ENCODE measurements at regions of chr19 and their contacts with region 1.

Region 1: GRCh38 chr19:8513687-8514504 is at the start of gene ZNF414:
- DNase-seq: peak; percentile 98
- ATAC-seq: peak; percentile 95
- total RNA-seq, gene ZNF414: 9.8 TPM

Region 2: GRCh38 chr19:7919610-7920518 is 594.0 kb before region 1 on chr19 and contains the start of gene SNAPC2:
- intact Hi-C with region 1: loop called (anchors 1 kb)
- DNase-seq: peak; percentile 99
- ATAC-seq: peak; percentile 72
- total RNA-seq, gene SNAPC2: 10.3 TPM

Region 3: DNA sequence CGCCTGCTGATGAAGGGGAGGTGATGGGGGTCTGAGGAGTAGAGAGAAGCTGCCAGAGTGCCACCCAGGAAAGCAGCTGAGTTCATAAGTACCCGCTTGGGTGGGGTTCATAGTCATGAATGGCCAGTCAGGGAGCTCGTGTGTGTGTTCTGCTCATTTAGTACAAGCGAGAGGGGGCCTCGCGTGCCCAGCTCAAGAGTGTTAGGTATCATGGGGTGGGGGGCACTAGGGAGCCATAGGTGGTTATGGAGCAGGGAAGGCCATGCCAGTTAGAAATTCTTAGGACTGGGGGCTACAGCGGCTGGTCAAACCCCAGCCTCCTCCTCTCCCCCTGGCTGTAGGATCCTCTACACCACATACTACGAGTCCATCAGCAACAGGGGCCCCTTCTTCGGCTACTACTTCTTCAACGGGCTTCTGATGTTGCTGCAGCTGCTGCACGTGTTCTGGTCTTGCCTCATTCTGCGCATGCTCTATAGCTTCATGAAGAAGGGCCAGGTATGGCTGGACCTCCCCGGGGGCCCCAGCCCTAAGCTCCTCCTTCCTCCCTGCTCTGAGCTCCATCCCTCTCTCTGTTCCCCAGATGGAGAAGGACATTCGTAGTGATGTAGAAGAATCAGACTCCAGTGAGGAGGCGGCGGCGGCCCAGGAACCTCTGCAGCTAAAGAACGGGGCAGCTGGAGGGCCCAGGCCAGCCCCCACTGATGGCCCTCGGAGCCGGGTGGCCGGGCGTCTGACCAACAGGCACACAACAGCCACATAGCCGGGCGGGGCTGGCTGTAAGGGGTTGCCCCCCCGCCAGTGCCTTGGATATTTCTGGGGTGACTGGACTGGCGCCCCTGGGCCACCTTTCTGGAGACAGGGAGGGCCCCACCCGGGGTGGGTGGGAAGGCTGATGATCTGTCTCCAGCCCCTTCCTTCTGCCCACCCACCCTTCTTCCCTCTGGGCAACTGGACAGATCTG is 252.3 kb before region 1 on chr19:
- intact Hi-C with region 1: loop called (anchors 10 kb)
- DNase-seq: no peak
- ATAC-seq: no peak

Region 4: DNA sequence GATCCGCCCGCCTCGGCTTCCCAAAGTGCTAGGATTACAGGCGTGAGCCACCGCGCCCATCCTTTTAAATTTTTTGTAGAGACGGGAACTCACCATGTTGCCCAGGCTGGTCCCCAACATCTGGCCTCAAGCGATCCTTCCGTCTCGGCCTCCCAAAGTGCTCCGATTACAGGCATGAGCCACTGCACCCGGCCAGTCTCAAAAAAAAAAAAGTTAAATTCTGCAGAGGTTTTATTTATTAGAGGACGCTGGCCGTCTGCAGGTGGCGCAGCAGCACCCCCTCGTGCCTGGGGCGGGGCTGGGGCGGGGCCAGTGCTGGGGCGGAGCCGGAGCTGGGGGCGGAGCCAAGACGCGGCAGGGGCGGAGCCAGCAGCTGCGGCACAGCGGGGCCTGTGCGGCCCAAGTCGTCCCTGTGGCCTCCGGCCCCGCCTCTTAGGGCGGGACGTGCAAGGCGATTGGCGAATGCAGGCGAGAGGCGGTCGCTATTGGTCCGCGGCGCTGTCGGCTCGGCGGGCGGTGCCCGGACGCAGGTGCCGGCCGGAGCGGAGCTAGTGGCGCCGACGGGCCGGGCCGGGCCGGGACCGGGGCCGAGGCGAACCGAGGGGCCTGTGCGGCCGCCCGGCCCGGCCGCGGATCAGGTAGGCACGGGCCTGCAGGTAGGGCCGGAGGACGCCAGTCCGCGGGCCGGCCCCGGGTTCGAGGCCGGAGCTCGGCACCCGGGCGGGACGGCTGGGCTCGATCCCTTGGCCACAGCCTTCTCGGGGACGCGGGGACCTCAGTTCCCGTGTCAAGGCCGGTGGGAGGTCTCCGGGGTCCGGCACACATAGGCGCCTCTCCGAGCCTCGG is 100.9 kb before region 1 on chr19 and contains the start of gene MARCHF2:
- intact Hi-C with region 1: loop called (anchors 2 kb)
- DNase-seq: peak; percentile 98
- ATAC-seq: peak; percentile 100
- total RNA-seq, gene MARCHF2: 110 TPM

Region 5: GRCh38 chr19:8473648-8474476 is 40.0 kb before region 1 on chr19:
- intact Hi-C with region 1: no loop called
- DNase-seq: no peak
- ATAC-seq: no peak